ENCODE measurements at regions of chr7 and their contacts with region 1.

Region 1: GRCh38 chr7:151008511-151009323 is 15.6 kb downstream of the ATG9B start:
- DNase-seq: peak; percentile 80
- H3K4me3 ChIP-seq: peak overlapping the region in 1 of 2 experiments; percentile 31; a peak in 1 of 4 replicates
- H3K27ac ChIP-seq: no peak overlapping the region
- H3K4me1 ChIP-seq: peaks cover 0 to 24% of the 10 kb centered on the region in 2 experiments; a peak in 1 of 4 replicates
- H3K27me3 ChIP-seq: 0 out of 2 replicates have a peak, but pooled peaks cover 5% of the 10 kb centered on the region
- CTCF ChIP-seq: peak; percentile 59
- EP300 ChIP-seq: no peak
- RAD21 ChIP-seq: no peak

Region 2: GRCh38 chr7:150799741-150800580 is 208.8 kb before region 1 on chr7 and contains the start of gene TMEM176B:
- CTCF ChIA-PET with region 1: no interaction called
- POLR2A ChIA-PET with region 1: no interaction called
- DNase-seq: peak; percentile 49
- H3K4me3 ChIP-seq: no peak within 1 kb of the TSS
- H3K27ac ChIP-seq: no peak within 1 kb of the TSS
- H3K4me1 ChIP-seq: peaks cover 0 to 7% of the 10 kb centered on the region in 2 experiments; a peak in 2 of 4 replicates
- H3K27me3 ChIP-seq: no peaks in the 10 kb centered on the region
- CTCF ChIP-seq: no peak
- EP300 ChIP-seq: no peak
- RAD21 ChIP-seq: no peak
- polyA plus RNA-seq, gene TMEM176B: 0.15 TPM in 1 of 2 replicates, not detected in the other

Region 3: DNA sequence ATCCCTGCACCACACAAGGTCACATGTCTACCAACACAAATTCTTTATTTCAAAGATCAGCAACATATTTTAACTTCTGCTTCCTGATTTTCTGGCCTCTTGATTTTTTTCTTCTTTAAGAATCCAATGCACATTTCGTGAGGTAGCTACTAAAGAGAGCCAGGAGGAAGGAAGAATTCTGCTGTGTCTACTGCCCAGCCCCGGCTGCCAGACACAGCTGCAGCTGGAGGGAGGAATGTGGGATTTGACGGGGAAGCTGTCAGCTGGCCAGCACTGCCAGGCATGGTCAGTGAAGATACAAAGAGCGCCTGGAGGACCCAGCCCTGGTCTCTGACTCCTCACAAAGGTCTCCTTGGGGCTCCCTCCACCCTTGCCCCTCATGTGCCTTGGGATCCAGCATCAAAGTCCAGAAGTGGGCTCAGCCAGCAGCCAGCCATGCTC is 163.3 kb before region 1 on chr7:
- CTCF ChIA-PET with region 1: no interaction called
- POLR2A ChIA-PET with region 1: no interaction called
- DNase-seq: peak; percentile 69
- H3K4me3 ChIP-seq: no peak overlapping the region
- H3K27ac ChIP-seq: peak overlapping the region in 1 of 2 experiments; percentile 51; a peak in 1 of 4 replicates
- H3K4me1 ChIP-seq: peaks cover 0 to 20% of the 10 kb centered on the region in 2 experiments; a peak in 1 of 4 replicates
- H3K27me3 ChIP-seq: no peaks in the 10 kb centered on the region
- CTCF ChIP-seq: no peak
- EP300 ChIP-seq: no peak
- RAD21 ChIP-seq: no peak

Region 4: GRCh38 chr7:150968734-150969372 is 39.9 kb before region 1 on chr7:
- CTCF ChIA-PET with region 1: interaction called, 48 read pairs
- POLR2A ChIA-PET with region 1: interaction called, 3 read pairs
- DNase-seq: no peak
- H3K4me3 ChIP-seq: no peak overlapping the region
- H3K27ac ChIP-seq: peak overlapping the region in 1 of 2 experiments; percentile 100; a peak in 1 of 4 replicates
- H3K4me1 ChIP-seq: peaks cover 0 to 94% of the 10 kb centered on the region in 2 experiments; a peak in 2 of 4 replicates
- H3K27me3 ChIP-seq: peaks cover 71% of the 10 kb centered on the region
- CTCF ChIP-seq: no peak
- EP300 ChIP-seq: no peak
- RAD21 ChIP-seq: no peak

Region 5: GRCh38 chr7:150994141-150994964 is 14.4 kb before region 1 on chr7:
- CTCF ChIA-PET with region 1: interaction called, 151 read pairs
- POLR2A ChIA-PET with region 1: interaction called, 5 read pairs
- DNase-seq: peak; percentile 83
- H3K4me3 ChIP-seq: no peak overlapping the region
- H3K27ac ChIP-seq: peak overlapping the region in 1 of 2 experiments; percentile 55; a peak in 1 of 4 replicates
- H3K4me1 ChIP-seq: peaks cover 0 to 20% of the 10 kb centered on the region in 2 experiments; a peak in 2 of 4 replicates
- H3K27me3 ChIP-seq: peaks cover 2% of the 10 kb centered on the region; the same call in 1 of the 2 replicates
- CTCF ChIP-seq: no peak
- EP300 ChIP-seq: no peak
- RAD21 ChIP-seq: no peak

Measured in SK-N-SH (cell line).